HAP-1 (cell line): ENCODE measurements at regions of chr10 and their contacts with region 1.

Region 1: DNA sequence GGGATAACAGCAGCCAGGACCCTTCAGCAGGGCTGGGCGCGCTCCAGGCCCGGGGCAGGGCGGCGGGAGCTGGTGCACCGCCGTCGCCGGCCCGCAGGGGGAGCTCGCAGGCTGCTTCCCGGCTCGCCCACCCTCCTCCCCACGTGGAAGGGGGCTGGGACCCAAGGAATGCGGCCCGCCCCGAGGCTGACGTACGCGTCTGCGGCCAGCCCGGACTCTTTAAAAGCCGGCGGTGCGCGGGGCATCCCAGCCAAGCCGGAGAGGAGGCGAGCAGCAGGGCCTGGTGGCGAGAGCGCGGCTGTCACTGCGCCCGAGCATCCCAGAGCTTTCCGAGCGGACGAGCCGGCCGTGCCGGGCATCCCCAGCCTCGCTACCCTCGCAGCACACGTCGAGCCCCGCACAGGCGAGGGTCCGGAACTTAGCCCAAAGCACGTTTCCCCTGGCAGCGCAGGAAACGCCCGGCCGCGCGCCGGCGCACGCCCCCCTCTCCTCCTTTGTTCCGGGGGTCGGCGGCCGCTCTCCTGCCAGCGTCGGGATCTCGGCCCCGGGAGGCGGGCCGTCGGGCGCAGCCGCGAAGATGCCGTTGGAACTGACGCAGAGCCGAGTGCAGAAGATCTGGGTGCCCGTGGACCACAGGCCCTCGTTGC is at the start of gene PFKFB3:
- DNase-seq: peak; percentile 76 to 96
- H3K4me3 ChIP-seq: peak within 1 kb of the TSS; percentile 53
- H3K4me1 ChIP-seq: peaks cover 29% of the 10 kb centered on the region
- H3K27me3 ChIP-seq: no peaks in the 10 kb centered on the region

Region 2: DNA sequence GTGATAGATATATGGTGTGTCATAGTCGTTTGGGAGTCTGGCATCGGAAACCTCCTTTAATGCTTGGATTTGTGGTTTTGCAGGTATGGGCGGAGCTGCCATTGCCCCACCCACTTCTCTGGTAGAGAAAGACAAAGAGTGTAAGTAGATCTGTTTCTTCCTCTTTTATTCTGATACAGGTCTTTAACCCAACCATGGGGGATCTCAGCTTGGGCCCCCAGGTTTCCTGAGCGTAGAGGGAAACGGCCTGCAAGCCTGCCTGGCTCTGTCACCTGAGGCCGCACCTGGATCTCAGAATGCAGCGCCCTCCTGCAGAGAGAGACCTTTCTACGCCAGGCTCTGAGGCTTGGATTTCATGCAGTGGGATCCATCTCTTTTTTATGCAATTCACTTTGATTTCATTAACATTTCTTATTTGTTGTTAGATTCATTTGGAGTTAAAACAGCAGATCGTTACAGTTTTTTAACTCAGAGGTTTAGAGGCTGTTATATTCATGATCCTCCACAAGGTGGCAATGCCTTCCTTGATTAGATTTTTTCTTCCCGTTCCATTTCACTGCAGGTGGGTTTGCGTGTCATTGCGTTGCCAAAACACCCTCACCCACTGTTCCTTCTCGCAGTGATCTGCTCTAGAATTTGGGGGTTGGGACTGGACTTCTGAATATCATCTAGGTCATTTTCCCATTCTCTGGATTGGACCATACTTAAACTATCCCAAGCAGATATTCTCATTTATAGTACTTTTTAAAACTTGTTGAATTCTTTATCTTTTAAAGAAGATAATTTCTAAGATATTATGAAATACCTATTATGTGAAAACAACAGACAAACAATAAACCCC is 94.0 kb before region 1 on chr10:
- in situ Hi-C with region 1: loop called (anchors 10 kb)
- DNase-seq: peak; percentile 45 to 49
- H3K4me3 ChIP-seq: no peak overlapping the region
- H3K4me1 ChIP-seq: peaks cover 11% of the 10 kb centered on the region; the same call in 1 of the 2 replicates
- H3K27me3 ChIP-seq: no peaks in the 10 kb centered on the region

Region 3: DNA sequence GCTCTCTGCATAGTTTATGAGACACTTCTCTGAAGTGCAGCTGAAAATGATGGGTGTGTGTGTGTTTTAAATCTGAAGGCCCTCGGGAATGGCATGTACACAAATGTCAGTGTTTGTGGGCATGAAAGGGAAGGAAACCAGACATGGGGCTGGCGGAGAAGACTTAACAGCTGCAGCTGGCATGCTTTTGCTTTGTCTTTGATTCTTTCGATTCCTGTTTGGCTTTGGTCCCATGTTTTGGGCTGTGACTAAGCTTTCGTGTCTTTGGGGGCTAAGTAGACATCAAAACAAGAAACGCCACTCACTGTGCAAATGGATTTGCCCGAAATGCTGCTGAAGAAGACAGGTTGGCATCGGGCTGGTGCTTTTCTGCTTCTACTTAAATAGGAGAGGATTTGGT is 179.3 kb after region 1 on chr10:
- in situ Hi-C with region 1: loop called (anchors 25 kb)
- DNase-seq: no peak
- H3K4me3 ChIP-seq: no peak overlapping the region
- H3K4me1 ChIP-seq: no peaks in the 10 kb centered on the region
- H3K27me3 ChIP-seq: no peaks in the 10 kb centered on the region